Gastrocnemius medialis (tissue), 4 donors: ENCODE measurements at regions of chr5 and their contacts with region 1.

Region 1: DNA sequence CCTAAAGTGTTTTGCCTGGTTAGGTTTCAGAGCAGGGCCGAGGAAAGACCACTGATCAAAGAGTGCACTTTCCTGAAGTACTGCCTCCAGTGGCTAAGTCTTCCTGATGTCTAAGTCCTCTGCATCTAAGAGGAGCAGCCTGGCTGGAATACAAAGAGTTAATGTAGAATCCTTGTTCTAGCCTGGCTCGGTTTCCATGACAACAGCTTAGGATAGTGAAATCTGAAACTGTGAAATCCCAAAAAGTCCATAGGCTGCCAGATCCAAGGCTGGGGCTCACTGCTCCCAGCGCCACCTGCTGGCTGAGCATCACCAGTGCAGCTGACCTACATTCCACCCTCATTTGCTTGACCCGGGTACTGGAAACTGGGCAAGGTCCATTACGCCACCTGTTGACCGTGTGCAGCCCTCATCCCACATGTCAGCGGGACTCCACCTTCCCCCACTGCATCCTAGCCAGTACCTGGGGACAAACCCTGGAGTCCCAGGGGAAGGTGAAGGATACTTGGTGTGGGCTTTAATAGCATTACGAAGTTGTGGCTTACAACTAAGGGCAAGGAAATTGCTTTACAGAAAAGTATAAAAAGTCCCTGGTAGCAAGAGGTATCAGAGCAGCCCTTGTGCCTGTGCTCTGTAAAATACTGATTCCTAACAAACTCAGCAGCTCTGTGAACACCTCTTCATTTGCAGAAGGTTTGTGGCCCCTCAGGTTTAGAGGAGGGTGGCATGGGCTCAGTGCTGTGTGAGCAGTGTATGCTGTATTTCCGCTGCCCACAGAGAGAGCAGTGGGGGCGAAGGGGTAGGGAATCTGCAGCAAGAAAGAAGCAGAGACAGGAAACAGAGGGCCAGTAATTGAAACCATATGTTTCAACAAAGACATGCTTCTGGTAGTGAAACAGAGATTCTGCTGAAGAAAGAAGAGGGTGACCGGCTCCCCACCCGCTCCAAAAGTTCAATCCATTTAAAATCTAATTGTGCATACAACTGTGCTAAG is 36.0 kb downstream of the PCDHGC5 start:
- DNase-seq: peak; percentile 88 to 94
- ATAC-seq: peak; percentile 58 to 65
- H3K4me3 ChIP-seq: no peak overlapping the region
- H3K27ac ChIP-seq: peak overlapping the region; percentile 87 to 92 (median 90)
- H3K4me1 ChIP-seq: peaks cover 64 to 75% of the 10 kb centered on the region in 2 donors
- H3K27me3 ChIP-seq: no peaks in the 10 kb centered on the region
- CTCF ChIP-seq: peak; percentile 98 to 99 (median 99)
- POLR2A ChIP-seq: no peak

Region 2: DNA sequence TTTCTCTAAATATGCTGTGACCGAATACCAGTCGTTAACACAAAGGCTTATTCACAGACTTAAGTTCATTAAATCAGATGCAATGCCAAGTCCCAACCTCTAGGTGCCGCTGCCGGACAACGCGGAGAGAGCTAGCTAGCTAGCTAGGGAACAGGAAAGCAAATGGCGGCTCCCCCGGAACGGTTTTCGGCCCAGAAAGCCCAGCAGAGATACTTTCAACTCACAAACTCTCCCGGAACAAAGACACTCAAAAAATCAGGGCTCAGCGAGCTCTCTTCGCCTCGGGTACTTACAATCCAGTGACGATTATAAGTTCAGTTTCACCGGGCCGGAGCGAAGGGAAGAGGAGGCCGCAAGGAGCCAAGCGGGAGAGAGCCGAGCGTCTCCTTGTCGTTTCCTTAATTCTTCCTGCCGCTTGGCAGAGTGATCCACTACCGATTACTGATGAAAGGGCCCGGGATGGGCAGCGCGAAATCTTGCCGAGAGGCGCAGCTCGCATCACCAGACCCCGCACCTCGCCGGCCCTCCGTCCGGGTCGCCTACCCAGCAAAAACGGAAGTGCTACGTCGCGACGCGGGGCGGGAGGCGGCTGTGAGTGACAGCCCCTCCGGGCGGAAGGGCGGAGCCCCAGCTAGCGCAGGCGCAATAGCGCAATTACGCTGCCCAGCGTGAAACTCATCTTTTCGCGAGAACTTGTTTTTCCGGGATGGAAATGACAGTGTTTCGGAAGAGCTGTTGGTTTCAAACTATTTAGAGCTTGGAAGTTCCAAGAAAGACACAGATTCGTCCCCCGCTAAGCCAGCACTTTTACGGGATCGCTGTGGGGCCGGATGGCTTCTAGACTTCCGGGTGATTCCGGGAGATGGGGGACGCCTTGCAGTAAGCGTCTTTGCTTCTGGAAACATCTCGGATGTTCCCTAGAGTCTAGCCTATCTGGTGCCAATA is 204.4 kb before region 1 on chr5 and contains the start of gene TAF7:
- in situ Hi-C with region 1: no loop called
- intact Hi-C with region 1: loop called (anchors 1 kb)
- DNase-seq: peak; percentile 82 to 88
- ATAC-seq: peak; percentile 94 to 97
- H3K4me3 ChIP-seq: peak within 1 kb of the TSS; percentile 62 to 86 (median 84)
- H3K27ac ChIP-seq: peak within 1 kb of the TSS; percentile 85 to 97 (median 94)
- H3K4me1 ChIP-seq: peaks cover 32 to 35% of the 10 kb centered on the region in 2 donors
- H3K27me3 ChIP-seq: no peaks in the 10 kb centered on the region
- CTCF ChIP-seq: peak; percentile 79 to 95 (median 88)
- POLR2A ChIP-seq: peak; percentile 99 to 100
- total RNA-seq, gene TAF7: 60.9 to 91.2 (median 79.8) TPM

Region 3: GRCh38 chr5:141430332-141431113 is 94.4 kb before region 1 on chr5 and contains the start of gene PCDHGA12:
- in situ Hi-C with region 1: no loop called
- intact Hi-C with region 1: loop called (anchors 1 kb)
- DNase-seq: peak; percentile 62 to 78
- ATAC-seq: peak; percentile 89 to 97
- H3K4me3 ChIP-seq: peak within 1 kb of the TSS; percentile 39 to 48 (median 40)
- H3K27ac ChIP-seq: peak within 1 kb of the TSS; percentile 33 to 62 (median 46)
- H3K4me1 ChIP-seq: peaks cover 0 to 10% of the 10 kb centered on the region in 2 donors
- H3K27me3 ChIP-seq: no peaks in the 10 kb centered on the region
- CTCF ChIP-seq: peak; percentile 52 to 71 (median 55)
- POLR2A ChIP-seq: no peak
- total RNA-seq, gene PCDHGA12: 1.1 to 5.4 (median 1.7) TPM

Region 4: GRCh38 chr5:141513627-141514329 is 11.1 kb before region 1 on chr5:
- in situ Hi-C with region 1: no loop called
- intact Hi-C with region 1: loop called (anchors 1 kb)
- DNase-seq: peak; percentile 84 to 91
- ATAC-seq: peak; percentile 48 to 58
- H3K4me3 ChIP-seq: peak overlapping the region; percentile 51 to 65 (median 55)
- H3K27ac ChIP-seq: peak overlapping the region; percentile 87 to 92 (median 90)
- H3K4me1 ChIP-seq: peaks cover 71 to 75% of the 10 kb centered on the region in 2 donors
- H3K27me3 ChIP-seq: no peaks in the 10 kb centered on the region
- CTCF ChIP-seq: no peak
- POLR2A ChIP-seq: peak; percentile 53 to 73

Region 5: DNA sequence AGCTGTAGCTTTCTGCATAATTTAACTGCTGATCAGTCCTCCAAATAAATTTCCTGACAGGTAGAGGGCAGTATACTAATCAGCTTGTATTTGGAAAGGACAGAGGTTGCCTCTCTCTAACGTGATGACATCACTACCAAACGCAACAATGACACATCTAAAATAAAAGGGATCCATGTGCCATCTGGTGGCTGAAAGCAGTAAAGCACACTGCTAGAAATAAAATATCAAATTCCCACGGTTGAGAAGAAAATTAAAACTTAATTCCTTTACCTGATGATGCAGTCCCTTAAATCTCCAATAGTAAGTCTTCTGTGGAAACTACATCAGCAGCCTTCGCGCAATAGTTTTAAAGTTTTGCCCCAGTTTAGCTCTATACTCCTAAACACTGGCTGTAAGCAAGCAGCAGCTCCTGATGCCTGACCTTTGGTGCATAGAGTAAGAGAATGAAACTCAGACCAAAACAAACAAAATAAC is 39.4 kb after region 1 on chr5:
- in situ Hi-C with region 1: loop called in 1 of 4 experiments (anchors 5 kb)
- intact Hi-C with region 1: loop called (anchors 2 kb)
- DNase-seq: peak; percentile 59 to 63
- ATAC-seq: peak; percentile 77
- H3K4me3 ChIP-seq: peak overlapping the region in 2 of 4 donors; percentile 8 to 20
- H3K27ac ChIP-seq: peak overlapping the region; percentile 77 to 92 (median 88)
- H3K4me1 ChIP-seq: peaks cover 31 to 40% of the 10 kb centered on the region in 2 donors
- H3K27me3 ChIP-seq: no peaks in the 10 kb centered on the region
- CTCF ChIP-seq: peak; percentile 92 to 100 (median 96)
- POLR2A ChIP-seq: no peak

Region 6: GRCh38 chr5:143395638-143396352 is 1870.9 kb after region 1 on chr5:
- in situ Hi-C with region 1: no loop called
- intact Hi-C with region 1: loop called (anchors 5 kb)
- DNase-seq: no peak
- ATAC-seq: no peak
- H3K4me3 ChIP-seq: peak overlapping the region; percentile 80 to 92 (median 86)
- H3K27ac ChIP-seq: peak overlapping the region; percentile 99 to 100 (median 99)
- H3K4me1 ChIP-seq: peaks cover 57 to 69% of the 10 kb centered on the region in 2 donors
- H3K27me3 ChIP-seq: no peaks in the 10 kb centered on the region
- CTCF ChIP-seq: no peak
- POLR2A ChIP-seq: no peak